Endothelial cell of umbilical vein (primary cell): ENCODE measurements at regions of chr17 and their contacts with region 1.

Region 1: GRCh38 chr17:44218344-44219107 is 949 bp downstream of the UBTF start:
- DNase-seq: peak; percentile 88
- H3K4me3 ChIP-seq: peak overlapping the region; percentile 9 to 68 (median 52)
- H3K27ac ChIP-seq: peak overlapping the region; percentile 71
- H3K4me1 ChIP-seq: peaks cover 34% of the 10 kb centered on the region
- H3K27me3 ChIP-seq: no peaks in the 10 kb centered on the region
- CTCF ChIP-seq: peak; percentile 53 to 72
- POLR2A ChIP-seq: no peak

Region 2: DNA sequence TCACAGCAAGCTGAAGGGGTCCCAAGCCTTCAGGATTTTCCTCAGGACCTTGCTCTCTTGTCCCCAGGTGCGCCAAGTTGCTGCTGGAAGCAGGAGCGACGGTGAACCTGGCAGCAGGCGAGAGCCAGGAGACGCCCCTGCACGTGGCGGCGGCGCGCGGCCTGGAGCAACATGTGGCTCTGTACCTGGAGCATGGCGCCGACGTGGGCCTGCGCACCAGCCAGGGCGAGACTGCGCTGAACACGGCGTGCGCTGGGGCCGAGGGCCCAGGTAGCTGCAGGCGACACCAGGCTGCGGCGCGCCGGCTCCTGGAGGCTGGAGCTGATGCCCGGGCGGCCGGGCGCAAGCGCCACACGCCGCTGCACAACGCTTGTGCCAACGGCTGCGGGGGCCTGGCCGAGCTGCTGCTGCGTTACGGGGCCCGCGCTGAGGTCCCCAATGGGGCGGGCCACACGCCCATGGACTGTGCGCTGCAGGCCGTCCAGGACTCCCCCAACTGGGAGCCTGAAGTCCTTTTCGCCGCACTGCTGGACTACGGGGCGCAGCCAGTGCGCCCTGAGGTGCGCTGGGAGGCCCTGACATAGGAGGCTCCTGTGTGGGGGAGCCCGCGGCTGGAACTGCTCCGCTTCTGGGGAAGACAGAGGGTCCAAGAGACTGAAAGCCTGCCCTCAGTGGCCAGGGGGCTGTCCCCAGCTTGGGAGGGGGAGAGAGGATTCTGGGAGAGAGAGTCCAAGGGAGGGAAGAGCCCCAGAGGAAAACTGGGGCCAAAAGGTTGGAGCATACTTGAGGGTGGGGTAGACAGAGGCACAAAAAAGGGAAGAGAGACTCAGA is 41.6 kb before region 1 on chr17:
- CTCF ChIA-PET with region 1: no interaction called
- POLR2A ChIA-PET with region 1: no interaction called
- dilution Hi-C with region 1: no loop called
- intact Hi-C with region 1: no loop called
- DNase-seq: no peak
- H3K4me3 ChIP-seq: no peak overlapping the region
- H3K27ac ChIP-seq: no peak overlapping the region
- H3K4me1 ChIP-seq: no peaks in the 10 kb centered on the region
- H3K27me3 ChIP-seq: no peaks in the 10 kb centered on the region
- CTCF ChIP-seq: no peak
- POLR2A ChIP-seq: no peak

Region 3: GRCh38 chr17:44308320-44308818 is 89.8 kb after region 1 on chr17 and contains the start of gene RUNDC3A:
- CTCF ChIA-PET with region 1: interaction called, 7 read pairs
- POLR2A ChIA-PET with region 1: no interaction called
- dilution Hi-C with region 1: no loop called
- intact Hi-C with region 1: loop called (anchors 5 kb)
- DNase-seq: peak; percentile 74
- H3K4me3 ChIP-seq: peak within 1 kb of the TSS in 1 of 3 experiments; percentile 9
- H3K27ac ChIP-seq: no peak within 1 kb of the TSS
- H3K4me1 ChIP-seq: no peaks in the 10 kb centered on the region
- H3K27me3 ChIP-seq: peaks cover 16 to 20% of the 10 kb centered on the region in 2 experiments
- CTCF ChIP-seq: no peak
- POLR2A ChIP-seq: no peak
- total RNA-seq, gene RUNDC3A: not detected in 2 replicates

Region 4: GRCh38 chr17:44338188-44338587 is 119.7 kb after region 1 on chr17:
- CTCF ChIA-PET with region 1: no interaction called
- POLR2A ChIA-PET with region 1: no interaction called
- dilution Hi-C with region 1: no loop called
- intact Hi-C with region 1: no loop called
- DNase-seq: no peak
- H3K4me3 ChIP-seq: no peak overlapping the region
- H3K27ac ChIP-seq: no peak overlapping the region
- H3K4me1 ChIP-seq: no peaks in the 10 kb centered on the region
- H3K27me3 ChIP-seq: peaks cover 0 to 2% of the 10 kb centered on the region in 2 experiments
- CTCF ChIP-seq: no peak
- POLR2A ChIP-seq: no peak